ENCODE measurements at regions of chr17 and their contacts with region 1.

Region 1: GRCh38 chr17:28540231-28540630 is 12.2 kb downstream of the UNC119 start:
- DNase-seq: no peak
- ATAC-seq: no peak
- H3K4me3 ChIP-seq: no peak overlapping the region
- H3K27ac ChIP-seq: no peak overlapping the region
- H3K4me1 ChIP-seq: peaks cover 4% of the 10 kb centered on the region; the same call in 1 of the 2 replicates
- H3K27me3 ChIP-seq: no peaks in the 10 kb centered on the region
- CTCF ChIP-seq: no peak

Region 2: GRCh38 chr17:28494445-28495188 is 45.6 kb before region 1 on chr17:
- CTCF ChIA-PET with region 1: no interaction called
- POLR2A ChIA-PET with region 1: no interaction called
- intact Hi-C with region 1: loop called (anchors 1 kb)
- DNase-seq: peak; percentile 66
- ATAC-seq: peak; percentile 88
- H3K4me3 ChIP-seq: no peak overlapping the region
- H3K27ac ChIP-seq: no peak overlapping the region
- H3K4me1 ChIP-seq: peaks cover 6% of the 10 kb centered on the region
- H3K27me3 ChIP-seq: no peaks in the 10 kb centered on the region
- CTCF ChIP-seq: peak; percentile 82

Region 3: GRCh38 chr17:28524476-28525368 is 15.5 kb before region 1 on chr17:
- CTCF ChIA-PET with region 1: no interaction called
- POLR2A ChIA-PET with region 1: no interaction called
- intact Hi-C with region 1: no loop called
- DNase-seq: peak; percentile 79
- ATAC-seq: peak; percentile 85
- H3K4me3 ChIP-seq: no peak overlapping the region
- H3K27ac ChIP-seq: no peak overlapping the region
- H3K4me1 ChIP-seq: peaks cover 26% of the 10 kb centered on the region
- H3K27me3 ChIP-seq: no peaks in the 10 kb centered on the region
- CTCF ChIP-seq: no peak

Measured in PC-3 (cell line).